CD8-positive, alpha-beta memory T cell (primary cell): ENCODE measurements at regions of chr7 and their contacts with region 1.

Region 1: DNA sequence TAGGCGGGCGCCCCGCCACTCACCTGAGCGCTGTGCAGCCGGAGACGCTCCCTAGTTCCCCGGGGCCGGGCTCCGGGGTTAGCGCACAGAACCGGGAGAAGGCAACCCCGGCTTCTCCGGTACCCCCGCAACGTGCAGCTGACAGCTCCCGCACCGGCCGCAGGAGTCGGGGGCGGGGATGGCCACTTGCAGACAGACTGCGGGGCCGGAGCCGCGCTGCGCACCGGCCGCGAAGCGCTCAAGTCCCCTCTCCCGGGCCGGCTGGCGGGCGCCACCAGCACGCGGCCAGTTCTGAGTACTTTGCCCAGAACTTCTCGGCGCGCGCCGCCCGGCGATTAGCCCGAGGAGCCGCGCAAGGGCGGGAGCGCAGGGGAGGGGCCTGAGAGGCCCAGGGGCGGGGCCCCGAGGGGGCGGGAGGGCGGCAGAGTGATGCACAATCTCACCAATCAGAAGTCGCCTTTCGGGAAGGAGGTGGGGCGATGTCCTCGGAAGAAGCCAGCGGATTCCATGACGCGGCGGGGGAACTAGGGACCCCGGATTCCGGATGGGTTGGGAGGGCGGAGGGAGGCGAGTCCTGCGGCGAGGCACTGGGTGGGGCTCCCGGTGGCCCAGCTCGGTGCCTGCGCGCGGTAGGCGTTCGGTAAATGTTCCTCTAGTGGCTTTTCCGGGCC is at the start of gene OSBPL3:
- DNase-seq: peak; percentile 92 to 98 (median 97)
- H3K4me3 ChIP-seq: peak within 1 kb of the TSS; percentile 96
- H3K4me3 Mint-ChIP-seq: peak within 1 kb of the TSS; percentile 87 to 99 (median 97)
- H3K27ac ChIP-seq: peak within 1 kb of the TSS; percentile 87
- H3K27ac Mint-ChIP-seq: peak within 1 kb of the TSS; percentile 79 to 99 (median 95)
- H3K4me1 ChIP-seq: peaks cover 45% of the 10 kb centered on the region
- H3K4me1 Mint-ChIP-seq: peaks cover 51 to 64% (median 64%) of the 10 kb centered on the region in 3 donors
- H3K27me3 ChIP-seq: no peaks in the 10 kb centered on the region
- H3K27me3 Mint-ChIP-seq: no peaks in the 10 kb centered on the region
- total RNA-seq, gene OSBPL3: 71.7 to 72.5 TPM

Region 2: GRCh38 chr7:24812310-24812945 is 167.6 kb before region 1 on chr7:
- CTCF ChIA-PET with region 1: interaction called, 18 read pairs
- POLR2A ChIA-PET with region 1: no interaction called
- DNase-seq: peak; percentile 21 to 56 (median 40)
- H3K4me3 ChIP-seq: no peak overlapping the region
- H3K4me3 Mint-ChIP-seq: no peak overlapping the region
- H3K27ac ChIP-seq: no peak overlapping the region
- H3K27ac Mint-ChIP-seq: peak overlapping the region in 4 of 8 donors; percentile 14 to 61 (median 34)
- H3K4me1 ChIP-seq: no peaks in the 10 kb centered on the region
- H3K4me1 Mint-ChIP-seq: peaks cover 0 to 4% (median 0%) of the 10 kb centered on the region in 3 donors
- H3K27me3 ChIP-seq: no peaks in the 10 kb centered on the region
- H3K27me3 Mint-ChIP-seq: no peaks in the 10 kb centered on the region

Region 3: DNA sequence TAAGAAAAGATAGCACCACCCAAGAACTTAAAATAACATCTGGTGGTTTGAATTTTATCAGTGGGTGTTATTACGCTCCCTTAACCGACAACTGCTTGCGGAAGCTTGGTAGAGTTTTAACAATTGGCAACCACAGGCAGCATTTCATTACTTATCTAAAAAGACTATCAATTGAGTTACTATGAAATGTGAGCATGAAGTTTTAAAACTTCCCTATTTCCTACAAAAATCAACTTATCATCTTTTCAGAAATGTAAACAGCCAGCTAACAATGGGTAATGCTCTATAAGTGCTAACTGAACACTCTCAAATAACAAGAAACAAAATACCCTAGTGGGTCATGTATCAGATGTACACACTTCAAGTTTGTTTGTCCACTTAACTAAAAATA is 68.8 kb before region 1 on chr7:
- CTCF ChIA-PET with region 1: interaction called, 26 read pairs
- POLR2A ChIA-PET with region 1: interaction called, 12 read pairs
- DNase-seq: peak in 3 of 5 donors; percentile 35 to 51 (median 50)
- H3K4me3 ChIP-seq: peak overlapping the region; percentile 26
- H3K4me3 Mint-ChIP-seq: peak overlapping the region; percentile 38 to 81 (median 69)
- H3K27ac ChIP-seq: peak overlapping the region; percentile 10
- H3K27ac Mint-ChIP-seq: peak overlapping the region; percentile 62 to 97 (median 88)
- H3K4me1 ChIP-seq: peaks cover 76% of the 10 kb centered on the region
- H3K4me1 Mint-ChIP-seq: peaks cover 6 to 62% (median 53%) of the 10 kb centered on the region in 3 donors
- H3K27me3 ChIP-seq: no peaks in the 10 kb centered on the region
- H3K27me3 Mint-ChIP-seq: no peaks in the 10 kb centered on the region

Region 4: GRCh38 chr7:25028370-25029021 is 48.5 kb after region 1 on chr7:
- CTCF ChIA-PET with region 1: interaction called, 27 read pairs
- POLR2A ChIA-PET with region 1: interaction called, 10 read pairs
- DNase-seq: peak in 3 of 5 donors; percentile 25 to 55 (median 51)
- H3K4me3 ChIP-seq: peak overlapping the region; percentile 35
- H3K4me3 Mint-ChIP-seq: peak overlapping the region; percentile 3 to 73 (median 61)
- H3K27ac ChIP-seq: peak overlapping the region; percentile 32
- H3K27ac Mint-ChIP-seq: peak overlapping the region; percentile 76 to 98 (median 87)
- H3K4me1 ChIP-seq: peaks cover 28% of the 10 kb centered on the region
- H3K4me1 Mint-ChIP-seq: peaks cover 47 to 77% (median 76%) of the 10 kb centered on the region in 3 donors
- H3K27me3 ChIP-seq: no peaks in the 10 kb centered on the region
- H3K27me3 Mint-ChIP-seq: peaks cover 0 to 2% of the 10 kb centered on the region in 2 donors

Region 5: GRCh38 chr7:25093268-25093826 is 113.3 kb after region 1 on chr7:
- CTCF ChIA-PET with region 1: interaction called, 27 read pairs
- POLR2A ChIA-PET with region 1: no interaction called
- DNase-seq: peak; percentile 57 to 78 (median 62)
- H3K4me3 ChIP-seq: no peak overlapping the region
- H3K4me3 Mint-ChIP-seq: no peak overlapping the region
- H3K27ac ChIP-seq: no peak overlapping the region
- H3K27ac Mint-ChIP-seq: no peak overlapping the region
- H3K4me1 ChIP-seq: no peaks in the 10 kb centered on the region
- H3K4me1 Mint-ChIP-seq: peaks cover 6 to 11% (median 8%) of the 10 kb centered on the region in 3 donors
- H3K27me3 ChIP-seq: no peaks in the 10 kb centered on the region
- H3K27me3 Mint-ChIP-seq: peaks cover 1 to 2% of the 10 kb centered on the region in 2 donors